ENCODE measurements at regions of chr19 and their contacts with region 1.

Region 1: GRCh38 chr19:47348819-47349795 is at the start of gene DHX34:
- DNase-seq: peak; percentile 97 to 100 (median 99)
- ATAC-seq: peak; percentile 100
- H3K4me3 ChIP-seq: peak within 1 kb of the TSS; percentile 92
- H3K4me3 Mint-ChIP-seq: peak within 1 kb of the TSS; percentile 91 to 100 (median 97)
- H3K27ac ChIP-seq: peak within 1 kb of the TSS; percentile 83
- H3K27ac Mint-ChIP-seq: peak within 1 kb of the TSS; percentile 88 to 97 (median 95)
- H3K4me1 ChIP-seq: peaks cover 0 to 12% of the 10 kb centered on the region in 2 donors
- H3K4me1 Mint-ChIP-seq: peaks cover 19 to 46% (median 44%) of the 10 kb centered on the region in 7 donors
- H3K27me3 ChIP-seq: no peaks in the 10 kb centered on the region
- H3K27me3 Mint-ChIP-seq: peaks cover 0 to 3% (median 0%) of the 10 kb centered on the region in 5 donors
- total RNA-seq, gene DHX34: 15.6 to 31.6 (median 29.5) TPM

Region 2: GRCh38 chr19:46850228-46851203 is 498.6 kb before region 1 on chr19 and contains the start of gene AP2S1:
- CTCF ChIA-PET with region 1: no interaction called
- POLR2A ChIA-PET with region 1: no interaction called
- intact Hi-C with region 1: loop called in 1 of 2 experiments (anchors 1 kb)
- DNase-seq: peak; percentile 73 to 98 (median 93)
- ATAC-seq: peak; percentile 97
- H3K4me3 ChIP-seq: peak within 1 kb of the TSS; percentile 89
- H3K4me3 Mint-ChIP-seq: peak within 1 kb of the TSS; percentile 87 to 99 (median 93)
- H3K27ac ChIP-seq: peak within 1 kb of the TSS; percentile 79
- H3K27ac Mint-ChIP-seq: peak within 1 kb of the TSS; percentile 68 to 96 (median 83)
- H3K4me1 ChIP-seq: peaks cover 9 to 12% of the 10 kb centered on the region in 2 donors
- H3K4me1 Mint-ChIP-seq: peaks cover 20 to 34% (median 29%) of the 10 kb centered on the region in 7 donors
- H3K27me3 ChIP-seq: no peaks in the 10 kb centered on the region
- H3K27me3 Mint-ChIP-seq: peaks cover 0 to 3% (median 0%) of the 10 kb centered on the region in 5 donors
- total RNA-seq, gene AP2S1: 34.4 to 116 (median 46.5) TPM

Region 3: DNA sequence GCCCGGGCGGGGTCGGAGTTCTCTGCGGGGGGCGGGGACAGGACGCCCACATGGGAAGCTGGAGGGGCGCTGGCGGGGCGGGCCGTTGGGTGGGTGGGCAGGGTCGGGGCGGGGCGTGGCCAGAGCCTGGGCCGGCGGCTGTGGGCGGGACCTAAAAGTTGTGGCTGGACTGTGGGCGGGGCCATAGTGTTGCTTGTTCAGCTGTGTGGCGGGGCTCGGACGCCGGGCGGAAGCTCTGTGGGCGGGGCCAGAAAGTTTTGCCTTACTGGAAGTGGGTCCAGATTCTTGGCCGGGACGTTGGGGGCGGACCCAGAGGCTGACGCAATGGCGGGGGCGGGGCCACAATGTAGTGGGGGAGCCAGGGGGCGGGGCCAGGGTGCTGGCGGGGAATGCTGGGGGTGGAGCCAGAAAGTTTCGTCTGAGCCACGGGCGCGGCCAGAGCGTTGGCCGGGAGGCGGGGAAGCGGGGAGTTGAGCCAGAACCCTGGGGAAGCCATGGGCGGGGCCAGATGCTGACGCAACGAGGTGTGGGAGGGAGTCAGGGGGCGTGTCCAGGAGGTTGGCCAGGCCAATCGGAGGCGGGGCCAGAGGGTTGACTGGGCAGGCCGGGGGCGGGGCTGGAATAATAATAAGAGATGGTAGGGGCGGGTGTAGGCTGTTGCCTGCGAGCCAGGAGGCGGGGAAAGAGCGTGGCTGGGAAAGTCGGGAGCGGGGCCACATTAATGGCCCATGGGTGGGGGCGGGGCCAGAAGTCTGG is 92.2 kb before region 1 on chr19:
- CTCF ChIA-PET with region 1: no interaction called
- POLR2A ChIA-PET with region 1: no interaction called
- intact Hi-C with region 1: loop called (anchors 1 kb)
- DNase-seq: peak; percentile 94 to 100 (median 96)
- ATAC-seq: peak; percentile 88
- H3K4me3 ChIP-seq: peak overlapping the region; percentile 65
- H3K4me3 Mint-ChIP-seq: peak overlapping the region; percentile 85 to 97 (median 90)
- H3K27ac ChIP-seq: peak overlapping the region; percentile 90
- H3K27ac Mint-ChIP-seq: peak overlapping the region; percentile 90 to 99 (median 97)
- H3K4me1 ChIP-seq: peaks cover 15 to 24% of the 10 kb centered on the region in 2 donors
- H3K4me1 Mint-ChIP-seq: peaks cover 35 to 46% (median 39%) of the 10 kb centered on the region in 7 donors
- H3K27me3 ChIP-seq: no peaks in the 10 kb centered on the region
- H3K27me3 Mint-ChIP-seq: peaks cover 0 to 2% (median 0%) of the 10 kb centered on the region in 5 donors

Region 4: GRCh38 chr19:47428177-47428894 is 79.2 kb after region 1 on chr19:
- CTCF ChIA-PET with region 1: interaction called, 3 read pairs
- POLR2A ChIA-PET with region 1: no interaction called
- intact Hi-C with region 1: loop called in 1 of 2 experiments (anchors 2 kb)
- DNase-seq: peak; percentile 50 to 91 (median 71)
- ATAC-seq: peak; percentile 91
- H3K4me3 ChIP-seq: peak overlapping the region; percentile 50
- H3K4me3 Mint-ChIP-seq: no peak overlapping the region
- H3K27ac ChIP-seq: no peak overlapping the region
- H3K27ac Mint-ChIP-seq: no peak overlapping the region
- H3K4me1 ChIP-seq: peaks cover 10 to 34% of the 10 kb centered on the region in 2 donors
- H3K4me1 Mint-ChIP-seq: peaks cover under 1 to 23% (median 10%) of the 10 kb centered on the region in 7 donors
- H3K27me3 ChIP-seq: peaks cover 10 to 12% of the 10 kb centered on the region in 2 donors
- H3K27me3 Mint-ChIP-seq: peaks cover 39 to 47% (median 44%) of the 10 kb centered on the region in 5 donors

Region 5: GRCh38 chr19:47778089-47778953 is 429.2 kb after region 1 on chr19 and contains the start of gene SELENOW:
- CTCF ChIA-PET with region 1: no interaction called
- POLR2A ChIA-PET with region 1: no interaction called
- intact Hi-C with region 1: loop called in 1 of 2 experiments (anchors 1 kb)
- DNase-seq: peak; percentile 56 to 86 (median 76)
- ATAC-seq: peak; percentile 95
- H3K4me3 ChIP-seq: peak within 1 kb of the TSS; percentile 88
- H3K4me3 Mint-ChIP-seq: peak within 1 kb of the TSS; percentile 84 to 99 (median 93)
- H3K27ac ChIP-seq: peak within 1 kb of the TSS; percentile 87
- H3K27ac Mint-ChIP-seq: peak within 1 kb of the TSS; percentile 70 to 96 (median 91)
- H3K4me1 ChIP-seq: peaks cover 8 to 19% of the 10 kb centered on the region in 2 donors
- H3K4me1 Mint-ChIP-seq: peaks cover 8 to 40% (median 32%) of the 10 kb centered on the region in 7 donors
- H3K27me3 ChIP-seq: no peaks in the 10 kb centered on the region
- H3K27me3 Mint-ChIP-seq: no peaks in the 10 kb centered on the region
- total RNA-seq, gene SELENOW: 67.5 to 116 (median 101) TPM